Activated CD4-positive, alpha-beta T cell treated with anti-CD3 and anti-CD28 coated beads, Interleukin-2, amount 10 ng/mL, durations not matched to agents 7 days and 5 days (primary cell): ENCODE measurements at regions of chr13 and their contacts with region 1.

Region 1: DNA sequence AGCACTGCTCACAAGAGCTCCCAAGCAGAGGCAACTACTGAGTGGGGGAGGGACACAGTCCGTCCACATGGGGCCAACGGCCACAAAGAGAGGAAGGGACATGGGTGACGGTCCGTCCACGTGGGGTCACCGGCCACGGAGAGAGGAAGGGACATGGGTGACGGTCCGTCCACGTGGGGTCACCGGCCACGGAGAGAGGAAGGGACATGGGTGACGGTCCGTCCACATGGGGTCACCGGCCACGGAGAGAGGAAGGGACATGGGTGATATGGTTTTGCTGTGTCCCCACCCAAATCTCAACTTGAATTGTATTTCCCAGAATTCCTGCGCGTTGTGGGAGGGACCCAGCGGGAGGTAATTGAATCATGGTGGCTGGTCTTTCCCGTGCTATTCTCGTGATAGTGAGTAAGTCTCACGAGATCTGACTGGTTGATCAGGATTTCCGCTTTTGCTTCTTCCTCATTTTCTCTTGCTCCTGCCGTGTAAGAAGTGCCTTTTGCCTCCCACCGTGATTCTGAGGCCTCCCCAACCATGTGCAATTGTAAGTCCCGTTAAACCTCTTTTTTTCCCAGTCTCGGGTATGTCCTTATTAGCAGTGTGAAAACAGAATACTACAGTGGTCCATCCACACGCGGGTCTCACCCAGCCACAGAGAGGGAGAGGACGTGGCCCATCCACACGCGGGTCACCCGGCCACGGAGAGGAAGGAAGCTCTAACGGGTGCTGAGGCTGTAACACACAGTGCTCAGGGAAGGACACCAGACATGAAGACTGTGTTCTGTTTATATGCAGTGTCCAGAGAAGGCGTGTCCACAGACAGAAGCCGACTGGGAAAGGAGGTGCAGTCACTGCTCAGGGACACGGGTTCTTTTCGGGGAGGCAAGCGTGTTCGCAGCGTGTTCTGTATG is 48.5 kb downstream of the GAS6 start:
- DNase-seq: peak; percentile 62
- H3K4me3 Mint-ChIP-seq: peak overlapping the region; percentile 96
- H3K27ac Mint-ChIP-seq: peak overlapping the region; percentile 87
- H3K4me1 Mint-ChIP-seq: peaks cover 22% of the 10 kb centered on the region
- H3K27me3 Mint-ChIP-seq: no peaks in the 10 kb centered on the region

Region 2: GRCh38 chr13:113548171-113548641 is 267.2 kb before region 1 on chr13:
- CTCF ChIA-PET with region 1: no interaction called
- POLR2A ChIA-PET with region 1: no interaction called
- DNase-seq: peak; percentile 3
- H3K4me3 Mint-ChIP-seq: no peak overlapping the region
- H3K27ac Mint-ChIP-seq: no peak overlapping the region
- H3K4me1 Mint-ChIP-seq: peaks cover 3% of the 10 kb centered on the region
- H3K27me3 Mint-ChIP-seq: no peaks in the 10 kb centered on the region

Region 3: GRCh38 chr13:113825841-113826240 is 10.4 kb after region 1 on chr13:
- CTCF ChIA-PET with region 1: interaction called, 19 read pairs
- POLR2A ChIA-PET with region 1: no interaction called
- DNase-seq: no peak
- H3K4me3 Mint-ChIP-seq: no peak overlapping the region
- H3K27ac Mint-ChIP-seq: no peak overlapping the region
- H3K4me1 Mint-ChIP-seq: no peaks in the 10 kb centered on the region
- H3K27me3 Mint-ChIP-seq: no peaks in the 10 kb centered on the region

Region 4: DNA sequence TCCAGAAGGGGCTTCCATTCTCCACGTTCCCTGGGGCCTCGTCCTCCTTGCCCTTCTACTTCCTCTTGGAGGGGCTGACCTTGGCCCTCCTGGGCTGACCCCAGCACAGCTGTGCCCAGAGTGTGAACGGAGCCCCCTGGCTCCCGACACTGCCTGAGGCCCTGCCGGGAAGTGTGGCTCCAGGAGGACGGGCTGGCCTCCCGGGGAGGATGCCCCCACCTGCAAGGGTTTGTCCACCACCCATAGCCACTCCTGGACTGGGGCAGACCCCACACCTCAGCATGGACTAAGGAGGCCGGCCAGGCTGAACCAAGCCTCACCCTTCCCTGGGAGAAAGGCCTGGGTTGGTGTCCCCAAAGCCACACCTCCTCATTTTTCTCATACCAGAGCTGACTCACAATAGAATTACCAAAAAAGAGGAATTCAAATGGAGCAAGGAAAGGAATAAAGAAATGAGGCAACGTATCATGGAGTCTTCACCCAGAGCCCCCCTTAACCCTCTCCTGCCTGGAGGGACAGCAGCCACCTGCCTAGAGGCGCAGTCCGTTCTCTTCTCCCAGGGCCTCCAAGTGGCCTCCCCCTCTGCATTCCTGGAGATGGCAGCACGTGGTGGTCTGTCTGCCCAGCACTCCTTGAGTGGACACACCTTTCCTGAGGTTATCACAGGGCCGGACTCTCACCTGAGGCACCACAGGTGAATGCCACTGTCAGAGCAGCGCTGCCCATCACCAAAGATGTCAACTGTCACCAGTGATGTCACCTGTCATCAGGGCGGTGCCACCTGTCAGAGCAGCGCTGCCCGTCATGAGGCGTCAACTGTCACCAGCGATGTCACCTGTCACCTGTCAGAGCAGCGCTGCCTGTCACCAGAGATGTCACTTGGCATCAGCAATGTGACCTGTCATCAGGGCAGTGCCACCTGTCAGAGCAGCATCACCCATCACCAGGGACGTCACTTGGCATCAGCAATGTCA is 161.6 kb after region 1 on chr13:
- CTCF ChIA-PET with region 1: no interaction called
- POLR2A ChIA-PET with region 1: no interaction called
- DNase-seq: no peak
- H3K4me3 Mint-ChIP-seq: no peak overlapping the region
- H3K27ac Mint-ChIP-seq: peak overlapping the region; percentile 69
- H3K4me1 Mint-ChIP-seq: peaks cover 2% of the 10 kb centered on the region
- H3K27me3 Mint-ChIP-seq: no peaks in the 10 kb centered on the region